Heart right ventricle (tissue), 16 donors: ENCODE measurements at regions of chr1 and their contacts with region 1.

Region 1: GRCh38 chr1:26602378-26602959 is 72.9 kb downstream of the RPS6KA1 start:
- DNase-seq: peak in 1 of 2 donors; percentile 70
- ATAC-seq: peak in 3 of 8 donors; percentile 46 to 54 (median 52)
- H3K4me3 ChIP-seq: no peak overlapping the region
- H3K27ac ChIP-seq: no peak overlapping the region
- H3K4me1 ChIP-seq: peaks cover 0 to 8% (median 5%) of the 10 kb centered on the region in 9 donors
- H3K27me3 ChIP-seq: no peaks in the 10 kb centered on the region
- CTCF ChIP-seq: peak; percentile 77 to 95 (median 87)

Region 2: GRCh38 chr1:26677306-26678115 is 75.0 kb after region 1 on chr1:
- intact Hi-C with region 1: loop called in 5 of 10 experiments (anchors 2 to 10 kb)
- DNase-seq: peak; percentile 63 to 77
- ATAC-seq: peak; percentile 88 to 100 (median 95)
- H3K4me3 ChIP-seq: peak overlapping the region in 6 of 10 donors; percentile 6 to 31 (median 18)
- H3K27ac ChIP-seq: peak overlapping the region in 4 of 10 donors; percentile 21 to 51 (median 38)
- H3K4me1 ChIP-seq: peaks cover 0 to 21% (median 11%) of the 10 kb centered on the region in 9 donors
- H3K27me3 ChIP-seq: no peaks in the 10 kb centered on the region
- CTCF ChIP-seq: peak; percentile 39 to 77 (median 63)